ENCODE measurements at regions of chr1 and their contacts with region 1.

Region 1: DNA sequence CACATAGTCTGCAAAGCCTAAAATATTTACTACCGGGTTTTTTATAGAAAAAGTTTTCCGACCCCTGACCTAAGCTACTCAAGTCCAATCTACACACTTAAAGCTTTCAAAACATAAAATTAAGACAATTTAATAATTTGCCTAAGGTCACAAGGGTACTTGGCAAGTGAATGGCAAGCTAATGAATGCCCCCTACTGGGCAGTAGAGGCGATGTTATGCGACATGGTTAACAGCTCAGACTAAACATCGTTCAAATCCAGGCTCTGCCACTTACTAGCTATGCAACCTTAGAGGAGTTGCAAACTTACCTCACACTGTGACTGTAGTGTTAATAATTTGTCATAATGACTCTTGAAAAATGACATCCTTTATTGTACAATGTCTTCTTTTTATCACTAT is 317.2 kb upstream of the NFIA start:
- DNase-seq: peak; percentile 32
- H3K4me3 ChIP-seq: no peak overlapping the region; a peak in 1 of 4 replicates
- H3K27ac ChIP-seq: no peak overlapping the region
- H3K4me1 ChIP-seq: peaks cover 0 to 3% of the 10 kb centered on the region in 2 experiments; a peak in 2 of 4 replicates
- H3K27me3 ChIP-seq: no peaks in the 10 kb centered on the region
- CTCF ChIP-seq: peak; percentile 64
- EP300 ChIP-seq: no peak
- RAD21 ChIP-seq: peak; percentile 82

Region 2: DNA sequence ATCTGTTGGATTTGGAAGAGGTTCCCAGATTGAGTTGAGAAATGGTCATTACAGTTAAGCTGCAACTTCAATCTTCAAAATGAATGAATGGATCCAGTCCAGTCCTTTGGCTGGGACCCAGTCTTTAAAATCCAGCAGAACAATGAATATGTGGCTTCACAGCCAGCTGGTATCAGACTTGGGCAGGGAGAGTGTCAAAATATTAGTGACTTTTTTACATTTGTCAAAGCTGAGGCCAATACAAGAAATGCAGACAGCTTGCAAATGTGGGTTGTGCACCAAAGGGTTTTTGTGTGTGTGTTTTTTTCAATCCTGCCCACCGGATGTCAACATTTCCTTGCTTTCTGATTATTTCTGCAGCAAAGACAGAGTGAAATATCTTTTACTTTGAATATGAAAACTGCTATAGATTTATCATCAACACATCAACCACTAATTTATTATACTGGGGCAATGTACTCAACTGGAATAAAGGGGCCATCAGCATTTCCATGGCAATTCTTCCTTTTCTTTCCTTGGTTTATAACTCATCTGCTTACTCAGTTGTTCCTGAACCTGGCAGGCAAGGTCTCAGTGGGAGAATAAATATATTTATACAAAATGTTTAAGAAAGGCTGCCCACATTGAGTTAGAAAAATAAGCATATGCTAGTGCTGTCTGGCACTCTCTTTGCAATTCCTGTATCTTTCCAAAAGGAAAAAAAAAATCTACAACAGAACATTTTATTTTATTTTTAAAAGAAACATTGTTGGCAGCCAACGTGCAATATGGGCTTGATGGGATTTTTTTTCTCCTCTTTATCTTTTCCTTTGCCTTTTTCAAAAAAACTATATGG is 200.1 kb before region 1 on chr1:
- CTCF ChIA-PET with region 1: interaction called, 15 read pairs
- POLR2A ChIA-PET with region 1: interaction called, 3 read pairs
- DNase-seq: no peak
- H3K4me3 ChIP-seq: no peak overlapping the region
- H3K27ac ChIP-seq: peak overlapping the region in 1 of 2 experiments; percentile 83; a peak in 2 of 4 replicates
- H3K4me1 ChIP-seq: peaks cover 0 to 6% of the 10 kb centered on the region in 2 experiments; a peak in 2 of 4 replicates
- H3K27me3 ChIP-seq: no peaks in the 10 kb centered on the region
- CTCF ChIP-seq: no peak
- EP300 ChIP-seq: no peak
- RAD21 ChIP-seq: peak; percentile 65

Region 3: DNA sequence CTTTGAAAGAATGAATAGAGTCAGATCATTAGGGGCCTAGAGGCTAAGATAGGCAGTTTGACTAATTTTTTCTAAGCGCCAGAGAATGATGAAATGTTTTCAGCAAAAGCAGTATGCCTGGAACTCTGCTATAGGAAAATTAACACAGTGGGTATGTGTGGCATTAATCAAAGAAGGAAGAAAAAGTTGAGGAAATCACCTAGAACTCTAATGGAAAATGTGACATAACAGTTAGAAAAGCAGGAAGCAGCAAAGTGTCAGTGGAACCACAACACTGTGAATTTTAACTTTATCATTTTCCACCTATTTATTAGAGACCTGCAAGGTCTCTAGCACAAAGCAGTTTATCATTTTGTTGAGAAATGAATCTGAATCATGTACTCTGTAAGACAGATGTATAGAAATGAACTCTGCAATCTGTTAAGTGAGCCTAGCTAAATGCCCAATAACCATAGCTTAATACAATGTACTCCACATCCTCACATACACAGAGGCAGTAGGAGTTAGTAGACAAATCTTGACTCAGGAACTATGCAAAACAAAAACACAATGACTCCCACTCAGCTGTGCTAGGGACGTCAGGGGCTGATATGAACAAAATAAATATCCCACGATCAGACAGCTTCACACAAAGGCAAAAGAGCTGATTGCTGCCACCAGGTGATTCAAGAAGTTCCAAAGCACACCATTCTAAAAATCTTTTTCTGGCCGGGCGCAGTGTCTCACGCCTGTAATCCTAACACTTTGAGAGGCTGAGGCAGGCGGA is 183.6 kb before region 1 on chr1:
- CTCF ChIA-PET with region 1: no interaction called
- POLR2A ChIA-PET with region 1: no interaction called
- DNase-seq: no peak
- H3K4me3 ChIP-seq: no peak overlapping the region
- H3K27ac ChIP-seq: no peak overlapping the region
- H3K4me1 ChIP-seq: peaks cover 0 to 5% of the 10 kb centered on the region in 2 experiments; a peak in 2 of 4 replicates
- H3K27me3 ChIP-seq: no peaks in the 10 kb centered on the region
- CTCF ChIP-seq: no peak
- EP300 ChIP-seq: no peak
- RAD21 ChIP-seq: no peak

Region 4: GRCh38 chr1:60753036-60753900 is 11.9 kb before region 1 on chr1:
- CTCF ChIA-PET with region 1: interaction called, 14 read pairs
- POLR2A ChIA-PET with region 1: no interaction called
- DNase-seq: peak; percentile 51
- H3K4me3 ChIP-seq: no peak overlapping the region
- H3K27ac ChIP-seq: peak overlapping the region in 1 of 2 experiments; percentile 94; a peak in 2 of 4 replicates
- H3K4me1 ChIP-seq: peaks cover 0 to 21% of the 10 kb centered on the region in 2 experiments; a peak in 2 of 4 replicates
- H3K27me3 ChIP-seq: no peaks in the 10 kb centered on the region
- CTCF ChIP-seq: no peak
- EP300 ChIP-seq: peak in 1 of 2 experiments; percentile 87; a peak in 2 of 4 replicates
- RAD21 ChIP-seq: peak; percentile 28

Region 5: DNA sequence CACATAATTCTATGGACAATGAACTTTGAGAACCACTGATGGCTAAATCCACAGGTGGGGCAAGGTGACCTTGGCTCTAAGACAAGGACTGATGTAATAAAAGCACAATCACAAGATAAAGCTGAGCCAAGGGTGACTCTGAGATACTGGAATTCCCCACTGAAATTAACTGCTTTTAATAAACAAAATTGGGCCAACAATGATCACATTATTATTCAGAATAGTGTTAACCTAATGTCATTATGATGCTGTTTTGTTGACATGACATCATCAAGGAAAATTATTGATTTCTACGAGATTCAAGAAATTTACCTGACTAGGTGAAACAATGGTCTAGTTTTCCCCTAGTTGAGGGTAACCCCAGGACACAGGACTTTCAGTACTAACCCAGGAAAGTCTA is 43.5 kb after region 1 on chr1:
- CTCF ChIA-PET with region 1: no interaction called
- POLR2A ChIA-PET with region 1: no interaction called
- DNase-seq: no peak
- H3K4me3 ChIP-seq: no peak overlapping the region
- H3K27ac ChIP-seq: no peak overlapping the region
- H3K4me1 ChIP-seq: no peaks in the 10 kb centered on the region
- H3K27me3 ChIP-seq: no peaks in the 10 kb centered on the region
- CTCF ChIP-seq: no peak
- EP300 ChIP-seq: no peak
- RAD21 ChIP-seq: no peak

Region 6: DNA sequence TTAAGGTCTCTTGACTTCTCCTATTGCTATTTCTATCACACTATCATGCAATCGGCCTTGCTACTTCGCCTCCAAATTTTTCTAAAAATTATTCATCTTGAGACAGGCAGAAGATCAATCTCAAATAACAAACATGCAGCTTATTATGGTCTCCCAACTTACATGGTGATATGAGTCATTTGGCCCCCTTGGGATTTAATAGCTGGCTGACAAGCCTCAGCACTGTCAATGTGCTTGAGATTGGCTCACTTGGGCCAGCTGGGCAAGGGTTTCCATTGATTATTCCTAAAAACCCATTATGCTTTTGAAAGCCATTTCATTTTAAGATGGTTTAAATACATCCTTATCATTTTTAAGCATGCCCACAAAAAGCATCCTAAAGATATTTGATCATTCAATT is 92.6 kb after region 1 on chr1:
- CTCF ChIA-PET with region 1: interaction called, 11 read pairs
- POLR2A ChIA-PET with region 1: no interaction called
- DNase-seq: no peak
- H3K4me3 ChIP-seq: no peak overlapping the region
- H3K27ac ChIP-seq: peak overlapping the region in 1 of 2 experiments; percentile 23; a peak in 2 of 4 replicates
- H3K4me1 ChIP-seq: peaks cover 8 to 42% of the 10 kb centered on the region in 2 experiments; a peak in 3 of 4 replicates
- H3K27me3 ChIP-seq: no peaks in the 10 kb centered on the region
- CTCF ChIP-seq: no peak
- EP300 ChIP-seq: no peak
- RAD21 ChIP-seq: no peak